PC-9 (cell line): ENCODE measurements at regions of chr1 and their contacts with region 1.

Region 1: GRCh38 chr1:91617285-91617765 is 116.7 kb downstream of the CDC7 start:
- DNase-seq: peak in 1 of 2 experiments; percentile 51
- H3K4me3 ChIP-seq: no peak overlapping the region
- H3K27ac ChIP-seq: no peak overlapping the region
- H3K4me1 ChIP-seq: peaks cover 13% of the 10 kb centered on the region
- H3K27me3 ChIP-seq: no peaks in the 10 kb centered on the region
- CTCF ChIP-seq: peak; percentile 37; the same call in 1 of the 2 replicates

Region 2: DNA sequence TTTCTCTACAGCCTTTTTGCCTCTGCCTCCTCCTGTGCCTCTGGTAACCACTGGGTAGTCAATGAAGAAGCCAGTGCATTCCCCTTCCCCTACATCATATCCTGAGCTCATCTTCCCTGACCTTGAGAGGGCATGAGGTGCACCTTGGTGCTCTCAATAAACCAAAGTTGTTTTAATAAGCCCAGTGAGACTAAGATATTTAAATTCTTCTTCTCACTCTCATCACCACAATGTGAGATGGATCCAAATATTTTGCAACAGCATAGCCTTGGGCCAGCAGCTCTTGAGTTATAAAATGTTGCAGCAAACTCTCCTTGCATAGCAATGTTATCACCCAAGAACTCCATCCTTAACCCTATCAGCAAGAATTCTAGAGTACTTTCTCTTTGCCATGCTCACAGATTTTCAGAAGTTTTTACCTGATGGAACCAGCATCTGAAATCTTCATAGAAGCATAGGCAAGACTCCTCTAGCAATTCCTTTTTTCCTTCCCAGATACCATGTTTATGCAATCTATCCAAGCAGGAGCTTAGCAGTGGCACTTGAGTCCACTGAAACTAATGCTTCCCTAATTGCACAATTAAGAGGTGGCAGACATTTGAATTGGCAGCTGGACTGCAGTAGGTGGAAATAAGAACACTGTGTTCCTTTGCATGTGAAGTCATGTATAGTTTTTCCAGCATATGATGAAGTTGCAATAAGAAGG is 79.9 kb before region 1 on chr1:
- CTCF ChIA-PET with region 1: no interaction called
- POLR2A ChIA-PET with region 1: no interaction called
- intact Hi-C with region 1: no loop called
- DNase-seq: no peak
- H3K4me3 ChIP-seq: no peak overlapping the region
- H3K27ac ChIP-seq: no peak overlapping the region
- H3K4me1 ChIP-seq: no peaks in the 10 kb centered on the region
- H3K27me3 ChIP-seq: no peaks in the 10 kb centered on the region
- CTCF ChIP-seq: no peak

Region 3: GRCh38 chr1:91803847-91804545 is 186.7 kb after region 1 on chr1:
- CTCF ChIA-PET with region 1: no interaction called
- POLR2A ChIA-PET with region 1: no interaction called
- intact Hi-C with region 1: loop called (anchors 10 kb)
- DNase-seq: peak; percentile 10 to 61
- H3K4me3 ChIP-seq: no peak overlapping the region
- H3K27ac ChIP-seq: peak overlapping the region; percentile 90
- H3K4me1 ChIP-seq: peaks cover 34% of the 10 kb centered on the region
- H3K27me3 ChIP-seq: no peaks in the 10 kb centered on the region
- CTCF ChIP-seq: no peak

Region 4: DNA sequence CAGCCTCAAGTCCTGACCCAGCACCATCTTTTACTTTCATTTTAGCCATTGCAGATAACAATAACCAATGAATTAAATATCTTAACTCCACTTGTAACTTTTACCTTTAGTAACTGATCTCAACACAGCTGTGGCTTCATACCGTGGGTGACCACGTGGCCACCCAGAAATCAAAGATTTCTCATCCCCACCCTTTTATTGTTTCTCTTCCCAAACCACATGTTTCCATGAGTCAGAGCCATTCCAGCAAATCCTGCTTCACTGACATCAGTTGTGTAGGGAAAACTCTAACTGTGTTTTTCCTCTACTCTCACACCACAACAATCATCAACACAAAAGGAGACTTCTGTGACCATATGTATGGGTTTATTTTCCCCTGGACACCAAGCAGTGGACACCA is 306.8 kb after region 1 on chr1:
- CTCF ChIA-PET with region 1: no interaction called
- POLR2A ChIA-PET with region 1: no interaction called
- intact Hi-C with region 1: loop called (anchors 10 kb)
- DNase-seq: no peak
- H3K4me3 ChIP-seq: no peak overlapping the region
- H3K27ac ChIP-seq: no peak overlapping the region
- H3K4me1 ChIP-seq: peaks cover 13% of the 10 kb centered on the region
- H3K27me3 ChIP-seq: no peaks in the 10 kb centered on the region
- CTCF ChIP-seq: no peak

Region 5: GRCh38 chr1:92030656-92031107 is 413.4 kb after region 1 on chr1:
- CTCF ChIA-PET with region 1: no interaction called
- POLR2A ChIA-PET with region 1: no interaction called
- intact Hi-C with region 1: no loop called
- DNase-seq: peak; percentile 44 to 93
- H3K4me3 ChIP-seq: peak overlapping the region; percentile 95
- H3K27ac ChIP-seq: peak overlapping the region; percentile 66
- H3K4me1 ChIP-seq: peaks cover 22% of the 10 kb centered on the region
- H3K27me3 ChIP-seq: no peaks in the 10 kb centered on the region
- CTCF ChIP-seq: no peak